ENCODE measurements at regions of chr3 and their contacts with region 1.

Region 1: DNA sequence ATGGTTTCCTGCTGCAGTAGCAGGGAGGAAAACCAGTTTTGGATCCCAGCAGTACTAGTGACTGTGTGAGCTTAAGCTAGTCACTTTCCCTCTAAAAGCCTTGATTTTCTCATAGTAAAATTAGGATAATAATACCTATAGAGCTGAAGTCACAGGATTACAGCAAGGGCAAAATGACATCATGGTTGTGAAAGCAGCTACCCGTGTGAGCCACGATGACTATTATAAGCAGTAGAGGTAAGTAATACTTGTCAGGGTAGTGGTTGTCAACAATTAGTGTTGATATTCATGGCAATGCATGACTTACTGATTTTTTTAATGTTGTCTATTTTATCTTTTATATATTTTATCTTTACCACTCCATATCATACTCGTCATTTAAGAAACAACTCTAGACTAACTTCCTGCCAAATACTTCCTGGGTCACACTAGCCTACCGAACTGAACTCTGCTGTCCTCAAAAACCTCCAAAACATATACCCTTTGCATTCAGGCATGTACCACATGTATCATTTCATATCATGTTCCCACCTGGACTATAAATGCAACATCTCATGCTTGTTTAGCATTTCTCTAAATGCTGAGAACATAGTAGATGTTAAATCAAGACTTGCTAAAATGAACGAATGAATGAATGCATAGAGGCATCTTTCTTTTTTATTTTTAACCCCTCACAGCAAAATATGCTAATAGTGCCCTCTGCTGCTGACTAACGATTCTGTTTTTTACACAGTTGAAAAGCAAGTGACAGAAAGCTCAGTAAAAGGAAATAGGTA is 172.6 kb downstream of the P3H2 start:
- DNase-seq: peak; percentile 51
- H3K4me3 Mint-ChIP-seq: peak overlapping the region; percentile 28
- H3K27ac Mint-ChIP-seq: no peak overlapping the region
- H3K4me1 Mint-ChIP-seq: peaks cover 5% of the 10 kb centered on the region
- H3K27me3 Mint-ChIP-seq: peaks cover 8% of the 10 kb centered on the region

Region 2: GRCh38 chr3:189340672-189341460 is 607.3 kb before region 1 on chr3:
- CTCF ChIA-PET with region 1: interaction called, 5 read pairs
- intact Hi-C with region 1: loop called (anchors 5 kb)
- DNase-seq: peak; percentile 27
- H3K4me3 Mint-ChIP-seq: no peak overlapping the region
- H3K27ac Mint-ChIP-seq: no peak overlapping the region
- H3K4me1 Mint-ChIP-seq: no peaks in the 10 kb centered on the region
- H3K27me3 Mint-ChIP-seq: no peaks in the 10 kb centered on the region

Region 3: DNA sequence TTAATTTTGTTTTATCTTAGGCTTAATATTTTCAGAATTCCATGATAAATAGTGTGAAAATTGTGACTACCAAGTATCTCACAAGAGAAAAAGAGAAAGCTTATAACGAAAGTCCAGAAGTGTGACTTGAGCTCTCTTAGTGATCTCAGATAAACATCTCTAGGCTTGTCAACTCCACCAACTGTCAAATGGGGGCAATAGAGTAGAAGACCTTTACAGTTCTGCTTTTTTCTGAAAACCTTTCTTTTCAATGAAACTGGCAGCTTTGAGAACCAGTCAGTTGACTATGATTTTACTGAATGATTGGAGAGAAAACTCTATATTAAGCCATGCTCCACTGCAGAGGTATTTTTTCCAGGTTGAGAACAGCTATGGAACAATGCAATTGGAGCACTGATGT is 436.1 kb before region 1 on chr3:
- CTCF ChIA-PET with region 1: no interaction called
- intact Hi-C with region 1: loop called (anchors 5 kb)
- DNase-seq: no peak
- H3K4me3 Mint-ChIP-seq: no peak overlapping the region
- H3K27ac Mint-ChIP-seq: no peak overlapping the region
- H3K4me1 Mint-ChIP-seq: peaks cover 3% of the 10 kb centered on the region
- H3K27me3 Mint-ChIP-seq: peaks cover 3% of the 10 kb centered on the region

Region 4: DNA sequence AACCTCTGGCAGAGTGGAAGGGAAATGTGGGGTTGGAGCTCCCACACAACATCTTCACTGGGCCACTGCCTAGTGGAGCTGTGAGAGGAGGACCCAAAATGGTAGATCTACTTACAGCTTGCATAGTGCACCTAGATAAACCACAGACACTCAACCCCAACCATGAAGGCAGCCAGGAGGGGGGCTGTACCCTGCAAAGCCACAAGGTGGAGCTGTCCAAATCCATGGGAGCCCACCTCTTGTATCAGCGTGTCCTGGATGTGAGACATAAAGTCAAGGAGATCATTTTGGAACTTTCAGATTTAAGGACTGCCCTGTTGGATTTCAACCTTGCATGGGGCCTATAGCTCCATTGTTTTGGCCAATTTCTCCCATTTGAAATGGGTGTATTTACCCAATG is 296.1 kb before region 1 on chr3:
- CTCF ChIA-PET with region 1: no interaction called
- intact Hi-C with region 1: loop called (anchors 1 kb)
- DNase-seq: peak; percentile 22
- H3K4me3 Mint-ChIP-seq: no peak overlapping the region
- H3K27ac Mint-ChIP-seq: no peak overlapping the region
- H3K4me1 Mint-ChIP-seq: no peaks in the 10 kb centered on the region
- H3K27me3 Mint-ChIP-seq: no peaks in the 10 kb centered on the region

Region 5: GRCh38 chr3:189727898-189728297 is 220.2 kb before region 1 on chr3:
- CTCF ChIA-PET with region 1: no interaction called
- intact Hi-C with region 1: no loop called
- DNase-seq: no peak
- H3K4me3 Mint-ChIP-seq: no peak overlapping the region
- H3K27ac Mint-ChIP-seq: no peak overlapping the region
- H3K4me1 Mint-ChIP-seq: no peaks in the 10 kb centered on the region
- H3K27me3 Mint-ChIP-seq: no peaks in the 10 kb centered on the region

Region 6: DNA sequence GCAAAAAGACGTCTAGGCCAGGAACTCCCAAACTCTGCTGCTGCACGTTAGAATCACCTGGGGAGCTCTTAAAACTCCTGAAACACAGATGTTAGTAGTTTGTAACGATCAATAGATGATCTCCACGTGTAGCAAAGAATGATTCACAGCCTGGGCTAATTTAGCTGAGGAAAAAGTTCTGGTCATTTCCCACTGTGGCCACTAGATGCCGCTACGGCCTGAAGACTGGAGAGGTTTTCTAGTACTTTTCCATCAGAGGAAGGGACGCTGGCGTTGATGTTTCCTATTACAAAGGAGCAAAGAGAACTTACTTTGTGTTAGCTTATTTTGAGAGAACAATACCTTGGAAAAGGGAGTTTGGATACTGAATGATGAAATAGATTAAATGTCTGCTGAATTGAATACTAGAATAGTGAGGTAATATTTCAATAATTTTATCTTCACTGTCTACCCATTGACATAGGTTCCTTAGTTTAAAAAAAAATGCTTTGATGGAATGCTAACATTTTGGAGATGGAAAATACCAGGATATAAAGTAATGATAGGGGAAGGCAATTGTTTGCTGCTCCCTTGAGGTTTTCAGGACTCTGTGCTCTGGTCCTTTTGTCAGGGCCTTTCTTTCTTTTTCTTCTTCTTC is 13.5 kb after region 1 on chr3:
- CTCF ChIA-PET with region 1: interaction called, 32 read pairs
- intact Hi-C with region 1: no loop called
- DNase-seq: peak; percentile 87
- H3K4me3 Mint-ChIP-seq: no peak overlapping the region
- H3K27ac Mint-ChIP-seq: no peak overlapping the region
- H3K4me1 Mint-ChIP-seq: peaks cover 5% of the 10 kb centered on the region
- H3K27me3 Mint-ChIP-seq: peaks cover 6% of the 10 kb centered on the region

Region 7: DNA sequence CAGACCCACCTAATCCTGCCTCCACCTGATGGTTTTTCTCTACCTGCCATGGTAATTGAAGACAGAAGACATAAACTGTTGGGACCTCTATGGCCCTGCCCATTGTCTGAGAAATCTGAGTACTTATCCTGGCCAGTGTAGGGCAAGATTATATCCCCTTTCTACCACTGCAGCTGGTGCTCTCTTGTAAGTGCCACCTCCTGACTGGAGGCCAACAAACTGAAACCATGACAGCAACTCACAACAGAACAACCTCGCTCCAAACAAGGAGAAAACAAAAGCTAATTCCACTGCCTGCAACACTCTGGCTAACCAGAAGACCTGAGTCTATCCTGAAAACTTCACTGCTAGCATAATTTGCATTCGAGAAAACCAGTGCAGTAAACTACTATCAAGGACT is 291.2 kb after region 1 on chr3:
- CTCF ChIA-PET with region 1: no interaction called
- intact Hi-C with region 1: no loop called
- DNase-seq: no peak
- H3K4me3 Mint-ChIP-seq: no peak overlapping the region
- H3K27ac Mint-ChIP-seq: no peak overlapping the region
- H3K4me1 Mint-ChIP-seq: no peaks in the 10 kb centered on the region
- H3K27me3 Mint-ChIP-seq: peaks cover 4% of the 10 kb centered on the region

Region 8: GRCh38 chr3:190596349-190597285 is 648.5 kb after region 1 on chr3:
- CTCF ChIA-PET with region 1: no interaction called
- intact Hi-C with region 1: no loop called
- DNase-seq: no peak
- H3K4me3 Mint-ChIP-seq: no peak overlapping the region
- H3K27ac Mint-ChIP-seq: no peak overlapping the region
- H3K4me1 Mint-ChIP-seq: peaks cover 11% of the 10 kb centered on the region
- H3K27me3 Mint-ChIP-seq: no peaks in the 10 kb centered on the region